Heart right ventricle (tissue), 16 donors: ENCODE measurements at regions of chr1 and their contacts with region 1.

Region 1: DNA sequence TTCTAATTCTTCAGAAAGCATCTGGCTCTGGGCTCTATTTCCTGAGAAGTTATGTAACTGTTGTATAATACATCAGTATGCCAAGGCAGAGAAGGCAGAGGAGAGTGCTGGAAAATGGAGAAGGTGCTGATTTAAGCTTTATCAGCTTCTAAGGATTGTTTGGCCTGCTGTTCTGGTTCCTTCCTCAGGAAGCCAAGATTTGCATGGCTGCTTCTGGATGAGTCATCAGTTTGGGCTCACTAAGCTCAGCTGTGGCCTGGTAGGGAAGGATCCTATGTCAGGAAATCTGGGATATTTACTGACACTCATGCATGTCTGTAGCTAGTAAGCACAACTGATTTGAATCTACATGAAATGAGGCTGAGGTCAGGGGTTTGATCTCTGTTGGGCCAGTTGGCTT is 73.2 kb upstream of the ADGRL4 start:
- DNase-seq: peak in 1 of 2 donors; percentile 60
- ATAC-seq: peak; percentile 79 to 97 (median 92)
- H3K4me3 ChIP-seq: no peak overlapping the region
- H3K27ac ChIP-seq: peak overlapping the region in 5 of 10 donors; percentile 37 to 67 (median 48)
- H3K4me1 ChIP-seq: peaks cover 0 to 31% (median 5%) of the 10 kb centered on the region in 9 donors
- H3K27me3 ChIP-seq: no peaks in the 10 kb centered on the region
- CTCF ChIP-seq: no peak

Region 2: GRCh38 chr1:79188321-79188720 is 108.6 kb after region 1 on chr1:
- intact Hi-C with region 1: loop called in 1 of 10 experiments (anchors 10 kb)
- DNase-seq: no peak
- ATAC-seq: no peak
- H3K4me3 ChIP-seq: peak overlapping the region in 1 of 10 donors; percentile 4
- H3K27ac ChIP-seq: peak overlapping the region in 1 of 10 donors; percentile 23
- H3K4me1 ChIP-seq: peaks cover 0 to 20% (median 0%) of the 10 kb centered on the region in 9 donors
- H3K27me3 ChIP-seq: no peaks in the 10 kb centered on the region
- CTCF ChIP-seq: no peak